SK-N-SH (cell line): ENCODE measurements at regions of chr5 and their contacts with region 1.

Region 1: DNA sequence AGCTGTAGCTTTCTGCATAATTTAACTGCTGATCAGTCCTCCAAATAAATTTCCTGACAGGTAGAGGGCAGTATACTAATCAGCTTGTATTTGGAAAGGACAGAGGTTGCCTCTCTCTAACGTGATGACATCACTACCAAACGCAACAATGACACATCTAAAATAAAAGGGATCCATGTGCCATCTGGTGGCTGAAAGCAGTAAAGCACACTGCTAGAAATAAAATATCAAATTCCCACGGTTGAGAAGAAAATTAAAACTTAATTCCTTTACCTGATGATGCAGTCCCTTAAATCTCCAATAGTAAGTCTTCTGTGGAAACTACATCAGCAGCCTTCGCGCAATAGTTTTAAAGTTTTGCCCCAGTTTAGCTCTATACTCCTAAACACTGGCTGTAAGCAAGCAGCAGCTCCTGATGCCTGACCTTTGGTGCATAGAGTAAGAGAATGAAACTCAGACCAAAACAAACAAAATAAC is 54.5 kb downstream of the DIAPH1 start:
- DNase-seq: peak; percentile 59
- H3K4me3 ChIP-seq: peak overlapping the region in 1 of 2 experiments; percentile 31; a peak in 1 of 4 replicates
- H3K27ac ChIP-seq: peak overlapping the region; percentile 77 to 82
- H3K4me1 ChIP-seq: peaks cover 11 to 15% of the 10 kb centered on the region in 2 experiments; a peak in 3 of 4 replicates
- H3K27me3 ChIP-seq: no peaks in the 10 kb centered on the region
- CTCF ChIP-seq: peak; percentile 99
- EP300 ChIP-seq: peak in 1 of 2 experiments; percentile 43; a peak in 2 of 4 replicates
- RAD21 ChIP-seq: peak; percentile 83

Region 2: DNA sequence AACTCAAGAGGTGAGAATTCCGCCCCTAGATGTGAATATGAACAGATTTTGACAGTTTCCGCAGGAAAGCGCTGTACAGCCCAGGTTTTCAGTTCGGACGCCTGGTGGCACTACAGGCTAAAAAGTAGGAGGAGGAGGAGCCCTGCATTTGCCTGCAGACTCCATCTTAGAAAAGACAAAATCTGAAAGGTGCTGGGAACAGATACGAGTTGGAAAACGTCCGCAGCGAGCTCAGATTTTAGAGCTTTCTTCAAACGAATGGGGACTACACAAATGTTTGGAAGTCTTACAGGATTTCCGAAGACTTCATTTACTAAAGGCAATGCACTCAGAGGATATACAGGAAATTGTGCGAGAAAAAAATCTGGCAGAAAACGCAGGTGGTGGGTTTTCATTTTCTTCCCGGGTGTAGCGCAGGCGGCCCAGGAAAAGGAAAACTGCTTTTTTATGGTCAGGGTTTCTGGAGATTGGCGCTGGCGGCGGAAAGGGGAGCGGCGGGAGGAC is 479.7 kb before region 1 on chr5:
- CTCF ChIA-PET with region 1: interaction called, 10 read pairs
- POLR2A ChIA-PET with region 1: no interaction called
- DNase-seq: peak; percentile 77
- H3K4me3 ChIP-seq: peak overlapping the region; percentile 60 to 63
- H3K27ac ChIP-seq: peak overlapping the region; percentile 51 to 89; a peak in 3 of 4 replicates
- H3K4me1 ChIP-seq: no peaks in the 10 kb centered on the region; a peak in 1 of 4 replicates
- H3K27me3 ChIP-seq: no peaks in the 10 kb centered on the region
- CTCF ChIP-seq: peak; percentile 75
- EP300 ChIP-seq: no peak
- RAD21 ChIP-seq: peak; percentile 82

Region 3: GRCh38 chr5:141199359-141200235 is 364.7 kb before region 1 on chr5 and contains the start of gene PCDHB11:
- CTCF ChIA-PET with region 1: interaction called, 15 read pairs
- POLR2A ChIA-PET with region 1: no interaction called
- DNase-seq: peak; percentile 41
- H3K4me3 ChIP-seq: peak within 1 kb of the TSS; percentile 18 to 26; a peak in 2 of 4 replicates
- H3K27ac ChIP-seq: no peak within 1 kb of the TSS
- H3K4me1 ChIP-seq: no peaks in the 10 kb centered on the region
- H3K27me3 ChIP-seq: no peaks in the 10 kb centered on the region
- CTCF ChIP-seq: peak; percentile 39
- EP300 ChIP-seq: no peak
- RAD21 ChIP-seq: peak; percentile 48
- polyA plus RNA-seq, gene PCDHB11: 0.41 and 0.61 TPM in 2 replicates

Region 4: DNA sequence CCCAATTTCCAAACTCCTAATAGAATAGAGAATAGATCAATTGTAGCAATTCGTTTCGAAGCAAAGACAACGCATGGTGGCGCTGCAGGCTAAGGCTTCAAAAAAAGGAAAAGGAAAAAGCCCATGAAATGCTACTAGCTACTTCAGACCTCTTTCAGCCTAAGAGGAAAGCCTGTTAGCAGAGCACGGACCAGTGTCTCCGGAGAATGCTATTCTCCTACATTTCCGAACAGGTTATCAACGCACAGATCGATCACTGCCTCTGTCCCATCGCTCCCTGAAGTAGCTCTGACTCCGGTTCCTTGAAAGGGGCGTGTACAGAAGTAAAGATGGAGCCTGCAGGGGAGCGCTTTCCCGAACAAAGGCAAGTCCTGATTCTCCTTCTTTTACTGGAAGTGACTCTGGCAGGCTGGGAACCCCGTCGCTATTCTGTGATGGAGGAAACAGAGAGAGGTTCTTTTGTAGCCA is 319.0 kb before region 1 on chr5 and contains the start of gene PCDHB15:
- CTCF ChIA-PET with region 1: interaction called, 12 read pairs
- POLR2A ChIA-PET with region 1: no interaction called
- DNase-seq: peak; percentile 30
- H3K4me3 ChIP-seq: peak within 1 kb of the TSS; percentile 19 to 24; a peak in 2 of 4 replicates
- H3K27ac ChIP-seq: no peak within 1 kb of the TSS
- H3K4me1 ChIP-seq: no peaks in the 10 kb centered on the region
- H3K27me3 ChIP-seq: no peaks in the 10 kb centered on the region
- CTCF ChIP-seq: peak; percentile 19; the same call in 1 of the 2 replicates
- EP300 ChIP-seq: no peak
- RAD21 ChIP-seq: peak; percentile 51
- polyA plus RNA-seq, gene PCDHB15: 0.99 and 1.3 TPM in 2 replicates

Region 5: DNA sequence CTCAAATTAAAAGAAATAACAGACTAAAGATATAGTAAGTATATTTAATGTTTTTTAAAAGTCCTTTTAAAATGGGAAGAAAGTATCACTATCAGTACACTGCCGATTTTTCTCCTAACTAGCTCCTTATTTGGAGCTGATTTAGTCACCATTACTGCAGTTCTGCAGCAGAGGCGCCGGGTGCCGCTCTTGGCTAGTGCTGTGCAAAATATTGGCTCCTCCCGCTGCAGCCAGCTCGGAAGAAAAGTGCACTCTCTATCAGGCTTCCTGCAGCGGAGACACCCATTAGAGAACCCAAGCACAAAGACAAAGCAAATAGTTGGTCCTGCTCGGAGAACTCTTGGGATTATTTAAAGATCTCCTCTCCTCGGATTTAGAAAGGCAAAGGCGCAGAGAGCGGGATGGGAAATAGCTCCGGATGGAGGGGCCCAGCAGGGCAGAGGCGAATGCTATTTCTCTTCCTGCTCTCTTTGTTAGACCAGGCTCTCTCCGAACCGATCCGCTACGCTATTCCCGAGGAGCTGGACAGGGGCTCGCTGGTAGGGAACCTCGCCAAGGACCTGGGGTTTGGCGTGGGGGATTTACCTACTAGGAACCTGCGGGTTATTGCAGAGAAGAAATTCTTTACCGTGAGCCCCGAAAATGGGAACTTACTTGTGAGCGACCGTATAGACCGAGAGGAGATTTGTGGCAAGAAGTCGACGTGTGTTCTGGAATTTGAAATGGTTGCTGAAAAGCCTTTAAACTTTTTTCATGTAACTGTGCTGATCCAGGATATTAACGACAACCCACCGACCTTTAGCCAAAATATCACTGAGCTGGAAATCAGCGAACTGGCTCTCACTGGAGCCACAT is 194.0 kb before region 1 on chr5 and contains the start of gene PCDHGB3:
- CTCF ChIA-PET with region 1: interaction called, 11 read pairs
- POLR2A ChIA-PET with region 1: no interaction called
- DNase-seq: no peak
- H3K4me3 ChIP-seq: no peak within 1 kb of the TSS; a peak in 1 of 4 replicates
- H3K27ac ChIP-seq: no peak within 1 kb of the TSS
- H3K4me1 ChIP-seq: no peaks in the 10 kb centered on the region
- H3K27me3 ChIP-seq: no peaks in the 10 kb centered on the region
- CTCF ChIP-seq: no peak
- EP300 ChIP-seq: no peak
- RAD21 ChIP-seq: no peak
- polyA plus RNA-seq, gene PCDHGB3: 0.53 and 0.63 TPM in 2 replicates

Region 6: DNA sequence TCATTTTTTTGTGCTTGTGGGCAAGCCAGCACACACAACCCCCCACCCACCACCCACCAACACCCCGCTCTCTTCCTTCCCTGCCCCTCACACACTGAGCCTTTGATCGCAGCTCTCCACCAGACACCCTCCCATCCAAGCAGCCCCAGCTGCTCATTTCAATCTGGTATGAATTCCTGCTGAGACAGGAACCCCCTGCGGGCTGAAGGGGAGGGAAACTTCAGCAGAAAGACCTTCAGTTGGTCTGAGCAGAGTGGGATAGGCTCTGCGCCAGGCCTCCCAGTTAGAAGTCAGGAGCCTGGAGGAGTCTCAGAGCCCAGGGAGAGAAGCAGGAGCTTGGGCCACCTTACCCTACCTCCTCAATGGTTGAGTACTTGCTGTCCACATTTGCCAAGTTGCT is 68.2 kb before region 1 on chr5:
- CTCF ChIA-PET with region 1: no interaction called
- POLR2A ChIA-PET with region 1: no interaction called
- DNase-seq: no peak
- H3K4me3 ChIP-seq: no peak overlapping the region
- H3K27ac ChIP-seq: no peak overlapping the region
- H3K4me1 ChIP-seq: peaks cover 2 to 39% of the 10 kb centered on the region in 2 experiments; a peak in 3 of 4 replicates
- H3K27me3 ChIP-seq: no peaks in the 10 kb centered on the region
- CTCF ChIP-seq: no peak
- EP300 ChIP-seq: no peak
- RAD21 ChIP-seq: no peak

Region 7: DNA sequence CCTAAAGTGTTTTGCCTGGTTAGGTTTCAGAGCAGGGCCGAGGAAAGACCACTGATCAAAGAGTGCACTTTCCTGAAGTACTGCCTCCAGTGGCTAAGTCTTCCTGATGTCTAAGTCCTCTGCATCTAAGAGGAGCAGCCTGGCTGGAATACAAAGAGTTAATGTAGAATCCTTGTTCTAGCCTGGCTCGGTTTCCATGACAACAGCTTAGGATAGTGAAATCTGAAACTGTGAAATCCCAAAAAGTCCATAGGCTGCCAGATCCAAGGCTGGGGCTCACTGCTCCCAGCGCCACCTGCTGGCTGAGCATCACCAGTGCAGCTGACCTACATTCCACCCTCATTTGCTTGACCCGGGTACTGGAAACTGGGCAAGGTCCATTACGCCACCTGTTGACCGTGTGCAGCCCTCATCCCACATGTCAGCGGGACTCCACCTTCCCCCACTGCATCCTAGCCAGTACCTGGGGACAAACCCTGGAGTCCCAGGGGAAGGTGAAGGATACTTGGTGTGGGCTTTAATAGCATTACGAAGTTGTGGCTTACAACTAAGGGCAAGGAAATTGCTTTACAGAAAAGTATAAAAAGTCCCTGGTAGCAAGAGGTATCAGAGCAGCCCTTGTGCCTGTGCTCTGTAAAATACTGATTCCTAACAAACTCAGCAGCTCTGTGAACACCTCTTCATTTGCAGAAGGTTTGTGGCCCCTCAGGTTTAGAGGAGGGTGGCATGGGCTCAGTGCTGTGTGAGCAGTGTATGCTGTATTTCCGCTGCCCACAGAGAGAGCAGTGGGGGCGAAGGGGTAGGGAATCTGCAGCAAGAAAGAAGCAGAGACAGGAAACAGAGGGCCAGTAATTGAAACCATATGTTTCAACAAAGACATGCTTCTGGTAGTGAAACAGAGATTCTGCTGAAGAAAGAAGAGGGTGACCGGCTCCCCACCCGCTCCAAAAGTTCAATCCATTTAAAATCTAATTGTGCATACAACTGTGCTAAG is 39.4 kb before region 1 on chr5:
- CTCF ChIA-PET with region 1: interaction called, 191 read pairs
- POLR2A ChIA-PET with region 1: interaction called, 3 read pairs
- DNase-seq: peak; percentile 79
- H3K4me3 ChIP-seq: peak overlapping the region; percentile 23 to 52; a peak in 3 of 4 replicates
- H3K27ac ChIP-seq: peak overlapping the region; percentile 99 to 100
- H3K4me1 ChIP-seq: peaks cover 36 to 70% of the 10 kb centered on the region in 2 experiments
- H3K27me3 ChIP-seq: no peaks in the 10 kb centered on the region
- CTCF ChIP-seq: peak; percentile 100
- EP300 ChIP-seq: peak; percentile 81 to 86; a peak in 3 of 4 replicates
- RAD21 ChIP-seq: peak; percentile 98